Left colon (tissue), 2 donors: ENCODE measurements at regions of chr18 and their contacts with region 1.

Region 1: DNA sequence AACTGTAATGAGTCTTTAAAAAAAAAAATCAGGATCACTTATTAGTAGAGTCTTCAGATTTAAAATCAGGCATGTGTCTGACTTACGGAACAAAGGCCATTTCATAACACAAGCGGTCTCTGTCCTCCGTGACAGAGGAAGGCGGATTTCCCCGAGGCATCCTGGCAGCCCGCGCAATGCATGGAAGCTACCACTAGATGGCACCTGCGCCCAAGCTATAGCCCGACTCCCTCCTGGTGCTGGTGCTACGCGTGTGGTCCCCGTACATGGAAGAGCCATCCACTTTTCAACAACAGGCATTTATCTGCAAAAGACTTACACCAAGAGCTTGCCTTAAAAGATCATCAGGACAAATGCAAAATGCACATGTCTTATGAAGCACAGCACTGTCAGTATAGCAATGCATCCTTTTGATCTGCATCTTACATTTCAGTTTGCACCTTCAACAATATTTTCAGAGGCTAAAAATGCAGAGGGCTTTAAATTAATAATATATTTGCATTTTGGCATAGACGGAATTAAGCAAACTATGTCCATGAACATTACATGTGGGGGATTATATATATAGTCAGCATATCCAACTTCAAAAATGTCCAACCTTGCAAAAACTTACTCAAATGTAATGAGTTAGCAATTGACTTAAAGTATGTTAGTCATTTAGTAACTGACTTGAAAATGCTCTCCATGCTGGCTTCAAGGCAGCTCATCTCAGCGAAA is 96.0 kb downstream of the ZNF516 start:
- DNase-seq: peak; percentile 57 to 80
- ATAC-seq: peak; percentile 94

Region 2: GRCh38 chr18:76686737-76687262 is 287.7 kb after region 1 on chr18:
- intact Hi-C with region 1: loop called (anchors 5 to 10 kb)
- DNase-seq: peak; percentile 45 to 48
- ATAC-seq: peak; percentile 86

Region 3: GRCh38 chr18:76709659-76710645 is 310.9 kb after region 1 on chr18:
- intact Hi-C with region 1: loop called in 1 of 2 experiments (anchors 5 kb)
- DNase-seq: peak; percentile 43 to 68
- ATAC-seq: peak; percentile 86

Region 4: DNA sequence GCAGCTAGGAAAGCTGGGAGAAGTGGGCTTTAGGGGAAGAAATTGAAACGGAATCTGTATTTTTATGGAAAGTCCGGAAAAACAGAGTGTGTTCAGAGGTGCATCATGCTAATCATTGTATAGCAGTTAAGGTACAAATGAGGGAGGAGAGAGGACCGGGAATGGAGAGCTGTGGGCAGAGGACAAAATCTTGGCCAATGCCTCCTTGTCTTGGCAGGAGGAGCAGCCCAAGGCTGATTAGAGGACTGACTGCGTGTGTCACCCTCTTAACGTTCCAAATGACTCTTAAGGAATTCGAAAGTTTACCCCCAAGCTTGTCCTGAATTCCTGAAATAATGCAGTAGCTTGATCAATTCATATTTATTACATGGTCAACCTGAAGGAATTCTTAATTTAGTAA is 504.3 kb after region 1 on chr18:
- intact Hi-C with region 1: no loop called
- DNase-seq: no peak
- ATAC-seq: no peak